GM10248 (cell line): ENCODE measurements at regions of chr4 and their contacts with region 1.

Region 1: GRCh38 chr4:7081891-7082471 is 14.1 kb upstream of the GRPEL1 start:
- DNase-seq: peak; percentile 66
- CTCF ChIP-seq: peak; percentile 55

Region 2: DNA sequence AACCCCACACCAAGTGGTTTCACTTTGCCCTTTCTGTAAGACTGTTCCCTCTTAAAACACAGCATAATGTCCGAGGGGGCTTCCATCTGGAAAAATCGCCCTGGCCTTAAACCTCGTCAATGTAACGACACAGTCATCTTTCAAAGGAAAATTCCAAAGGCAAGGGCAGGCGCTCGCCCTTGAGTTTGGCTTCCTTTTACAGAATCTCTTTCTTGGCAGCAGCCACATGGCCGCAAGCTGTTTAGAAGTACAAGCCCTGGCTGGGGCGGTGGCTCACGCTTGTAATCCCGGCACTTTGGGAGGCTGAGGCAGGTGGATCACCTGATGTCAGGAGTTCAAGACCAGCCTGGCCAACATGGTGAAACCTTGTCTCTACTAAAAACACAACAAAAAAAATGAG is 12.9 kb after region 1 on chr4:
- CTCF ChIA-PET with region 1: interaction called, 19 read pairs
- POLR2A ChIA-PET with region 1: no interaction called
- DNase-seq: no peak
- CTCF ChIP-seq: no peak